ENCODE measurements at regions of chr7 and their contacts with region 1.

Region 1: DNA sequence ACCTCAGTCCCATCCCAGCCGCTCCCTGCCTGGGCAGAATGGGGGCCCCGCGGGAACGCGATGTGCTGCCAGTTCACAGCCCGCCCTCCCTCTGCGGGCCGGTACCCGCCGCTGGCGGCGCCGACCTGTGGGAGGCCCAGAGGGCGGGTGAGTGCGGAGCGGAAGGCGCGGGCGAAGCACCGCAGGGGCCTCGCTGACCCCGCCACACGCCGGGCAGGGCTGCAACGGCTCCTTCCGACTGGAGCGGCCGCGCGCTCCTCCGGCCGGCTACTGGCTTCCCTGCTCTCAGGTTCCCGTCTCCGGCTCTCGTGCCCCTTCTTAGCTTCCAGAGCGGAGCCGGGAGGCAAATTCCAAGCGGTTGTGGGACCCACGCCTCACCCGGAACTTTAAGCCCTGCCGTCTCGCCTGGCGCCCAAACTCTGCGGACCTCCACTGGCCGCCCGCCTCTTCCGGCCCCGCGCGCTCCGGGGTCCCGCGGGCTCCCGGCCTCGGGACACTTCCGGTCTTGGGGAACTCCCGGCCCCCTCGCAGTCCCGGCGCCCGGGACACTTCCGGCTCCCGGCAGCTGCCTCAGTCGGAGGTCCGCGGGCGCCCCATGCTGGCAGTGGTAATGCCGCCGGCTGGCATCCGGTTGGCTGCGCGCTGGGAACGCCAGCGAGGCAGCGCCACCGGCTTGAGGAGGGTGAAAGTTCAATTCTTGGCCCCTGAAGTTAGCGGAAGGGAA is at the start of gene CYREN:
- DNase-seq: peak; percentile 94 to 97 (median 95)
- H3K4me3 ChIP-seq: peak within 1 kb of the TSS; percentile 96
- H3K27ac ChIP-seq: peak within 1 kb of the TSS; percentile 75 to 81
- H3K4me1 ChIP-seq: no peaks in the 10 kb centered on the region
- H3K27me3 ChIP-seq: no peaks in the 10 kb centered on the region
- CTCF ChIP-seq: peak in 2 of 3 donors; percentile 85 to 87
- EP300 ChIP-seq: no peak
- POLR2A ChIP-seq: peak; percentile 51
- total RNA-seq, gene CYREN: 25.4 to 54.2 (median 40.2) TPM

Region 2: DNA sequence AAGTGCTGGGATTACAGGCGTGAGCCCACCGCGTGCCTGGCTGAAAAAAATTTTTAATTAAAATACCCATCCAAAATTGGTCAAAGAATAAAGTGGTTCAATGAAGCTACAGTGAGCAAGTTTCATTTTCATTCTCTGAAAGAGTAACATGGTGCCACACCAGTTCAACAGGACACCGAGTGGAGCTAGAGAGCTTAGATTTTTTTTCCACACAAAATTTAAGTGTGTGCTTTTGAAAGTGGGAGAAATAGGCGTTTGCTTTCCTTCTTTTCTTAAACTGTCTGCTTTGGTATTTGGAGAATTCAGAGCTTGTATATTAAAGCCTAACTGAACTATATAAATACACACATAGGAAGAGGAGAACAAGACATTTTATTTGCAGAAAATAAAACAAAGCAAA is 480.4 kb before region 1 on chr7:
- intact Hi-C with region 1: loop called (anchors 5 to 10 kb)
- DNase-seq: peak in 2 of 5 donors; percentile 37 to 56
- H3K4me3 ChIP-seq: peak overlapping the region; percentile 22
- H3K27ac ChIP-seq: peak overlapping the region; percentile 43 to 72
- H3K4me1 ChIP-seq: peaks cover 26% of the 10 kb centered on the region
- H3K27me3 ChIP-seq: no peaks in the 10 kb centered on the region
- CTCF ChIP-seq: peak; percentile 31 to 86 (median 82)
- EP300 ChIP-seq: no peak
- POLR2A ChIP-seq: no peak

Region 3: DNA sequence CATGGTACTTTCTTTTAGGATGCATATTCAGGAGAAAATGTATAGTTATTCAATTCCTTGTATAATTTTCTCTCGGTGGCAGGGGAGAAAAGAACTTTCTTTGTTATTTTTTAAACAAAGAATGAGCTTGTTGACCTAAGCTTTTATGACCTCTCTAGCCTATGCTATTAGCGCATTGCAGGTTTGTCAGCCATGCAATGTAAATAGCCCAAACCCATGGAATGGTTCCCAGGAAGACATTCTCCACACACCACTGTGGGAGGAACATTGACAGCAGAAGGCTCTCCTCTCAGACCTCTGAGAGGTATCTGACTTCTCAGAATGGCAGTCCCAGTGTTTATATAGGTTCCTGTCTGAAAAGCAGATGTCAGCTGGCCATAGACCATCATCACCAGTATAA is 203.8 kb before region 1 on chr7:
- intact Hi-C with region 1: loop called in 1 of 4 experiments (anchors 10 kb)
- DNase-seq: no peak
- H3K4me3 ChIP-seq: no peak overlapping the region
- H3K27ac ChIP-seq: no peak overlapping the region
- H3K4me1 ChIP-seq: no peaks in the 10 kb centered on the region
- H3K27me3 ChIP-seq: no peaks in the 10 kb centered on the region
- CTCF ChIP-seq: no peak
- EP300 ChIP-seq: no peak
- POLR2A ChIP-seq: no peak

Region 4: DNA sequence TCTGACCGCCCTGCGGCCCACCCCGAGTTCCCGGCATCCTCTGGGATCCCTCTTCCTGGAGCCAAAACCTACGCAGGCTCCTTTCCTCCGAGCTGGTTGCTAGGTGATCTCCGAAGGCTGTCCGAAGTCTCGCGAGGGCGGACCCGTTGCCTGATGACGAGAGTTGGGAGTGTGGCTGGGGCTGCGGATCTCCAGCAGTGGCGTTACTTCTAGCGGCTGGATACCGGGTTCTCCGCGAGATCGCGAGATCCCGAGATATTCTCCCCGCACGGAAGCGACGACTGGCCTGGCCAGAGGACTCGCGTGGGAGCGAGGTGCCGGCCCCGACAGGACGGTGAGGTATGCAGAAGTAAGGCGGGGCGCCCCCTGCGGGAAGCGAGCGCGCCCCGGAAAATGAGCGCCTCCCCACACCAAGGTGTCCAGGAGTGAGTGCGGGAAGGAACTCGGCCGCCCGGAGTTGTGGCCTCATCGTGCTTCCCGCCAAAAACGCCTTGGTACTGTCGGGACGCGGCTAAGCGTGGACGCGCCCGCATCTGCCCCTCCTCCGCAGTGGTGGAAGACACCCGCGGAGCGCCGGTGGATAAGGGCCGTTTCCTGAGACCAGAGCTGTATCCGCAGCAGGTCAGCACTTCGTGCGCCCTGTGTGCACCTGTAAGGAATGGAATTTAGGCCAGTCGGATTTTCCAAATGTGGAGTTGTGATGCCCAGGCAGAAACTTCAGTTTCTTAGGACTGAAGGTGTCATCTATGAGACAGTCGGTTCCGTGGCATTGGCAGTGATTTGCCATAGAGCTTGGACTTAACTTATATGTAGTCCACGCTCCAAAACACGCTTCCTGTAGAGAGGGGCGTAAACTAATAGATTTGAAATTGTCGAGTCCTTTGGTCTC is 183.8 kb before region 1 on chr7 and contains the start of gene AGBL3:
- intact Hi-C with region 1: loop called in 2 of 4 experiments (anchors 10 kb)
- DNase-seq: peak; percentile 96 to 99 (median 98)
- H3K4me3 ChIP-seq: peak within 1 kb of the TSS; percentile 79
- H3K27ac ChIP-seq: peak within 1 kb of the TSS; percentile 70 to 87
- H3K4me1 ChIP-seq: peaks cover 4% of the 10 kb centered on the region
- H3K27me3 ChIP-seq: no peaks in the 10 kb centered on the region
- CTCF ChIP-seq: peak; percentile 59 to 89 (median 83)
- EP300 ChIP-seq: no peak
- POLR2A ChIP-seq: peak; percentile 69
- total RNA-seq, gene AGBL3: 2.0 to 8.1 (median 4.3) TPM

Region 5: GRCh38 chr7:134992626-134993179 is 177.7 kb before region 1 on chr7:
- intact Hi-C with region 1: loop called in 2 of 4 experiments (anchors 10 kb)
- DNase-seq: peak; percentile 30 to 59 (median 34)
- H3K4me3 ChIP-seq: no peak overlapping the region
- H3K27ac ChIP-seq: peak overlapping the region in 1 of 2 donors; percentile 40
- H3K4me1 ChIP-seq: peaks cover 23% of the 10 kb centered on the region
- H3K27me3 ChIP-seq: no peaks in the 10 kb centered on the region
- CTCF ChIP-seq: no peak
- EP300 ChIP-seq: no peak
- POLR2A ChIP-seq: no peak

Region 6: GRCh38 chr7:135098391-135098790 is 72.0 kb before region 1 on chr7:
- intact Hi-C with region 1: no loop called
- DNase-seq: no peak
- H3K4me3 ChIP-seq: no peak overlapping the region
- H3K27ac ChIP-seq: no peak overlapping the region
- H3K4me1 ChIP-seq: no peaks in the 10 kb centered on the region
- H3K27me3 ChIP-seq: no peaks in the 10 kb centered on the region
- CTCF ChIP-seq: no peak
- EP300 ChIP-seq: no peak
- POLR2A ChIP-seq: no peak

Region 7: GRCh38 chr7:135211179-135211945 is 40.9 kb after region 1 on chr7 and contains the start of gene WDR91:
- intact Hi-C with region 1: loop called in 1 of 4 experiments (anchors 2 kb)
- DNase-seq: peak; percentile 96 to 99 (median 97)
- H3K4me3 ChIP-seq: peak within 1 kb of the TSS; percentile 68
- H3K27ac ChIP-seq: peak within 1 kb of the TSS; percentile 90 to 94
- H3K4me1 ChIP-seq: peaks cover 1% of the 10 kb centered on the region
- H3K27me3 ChIP-seq: no peaks in the 10 kb centered on the region
- CTCF ChIP-seq: peak in 2 of 3 donors; percentile 17
- EP300 ChIP-seq: no peak
- POLR2A ChIP-seq: peak; percentile 74
- total RNA-seq, gene WDR91: 14.7 to 56.3 (median 32.7) TPM

Region 8: GRCh38 chr7:135300913-135301765 is 130.7 kb after region 1 on chr7:
- intact Hi-C with region 1: no loop called
- DNase-seq: no peak
- H3K4me3 ChIP-seq: no peak overlapping the region
- H3K27ac ChIP-seq: no peak overlapping the region
- H3K4me1 ChIP-seq: no peaks in the 10 kb centered on the region
- H3K27me3 ChIP-seq: no peaks in the 10 kb centered on the region
- CTCF ChIP-seq: no peak
- EP300 ChIP-seq: no peak
- POLR2A ChIP-seq: no peak